ENCODE measurements at regions of chr18 and their contacts with region 1.

Region 1: GRCh38 chr18:21663578-21663977 is 41.0 kb downstream of the ABHD3 start:
- DNase-seq: no peak
- H3K4me3 Mint-ChIP-seq: no peak overlapping the region
- H3K27ac Mint-ChIP-seq: no peak overlapping the region
- H3K4me1 Mint-ChIP-seq: no peaks in the 10 kb centered on the region
- H3K27me3 Mint-ChIP-seq: no peaks in the 10 kb centered on the region

Region 2: DNA sequence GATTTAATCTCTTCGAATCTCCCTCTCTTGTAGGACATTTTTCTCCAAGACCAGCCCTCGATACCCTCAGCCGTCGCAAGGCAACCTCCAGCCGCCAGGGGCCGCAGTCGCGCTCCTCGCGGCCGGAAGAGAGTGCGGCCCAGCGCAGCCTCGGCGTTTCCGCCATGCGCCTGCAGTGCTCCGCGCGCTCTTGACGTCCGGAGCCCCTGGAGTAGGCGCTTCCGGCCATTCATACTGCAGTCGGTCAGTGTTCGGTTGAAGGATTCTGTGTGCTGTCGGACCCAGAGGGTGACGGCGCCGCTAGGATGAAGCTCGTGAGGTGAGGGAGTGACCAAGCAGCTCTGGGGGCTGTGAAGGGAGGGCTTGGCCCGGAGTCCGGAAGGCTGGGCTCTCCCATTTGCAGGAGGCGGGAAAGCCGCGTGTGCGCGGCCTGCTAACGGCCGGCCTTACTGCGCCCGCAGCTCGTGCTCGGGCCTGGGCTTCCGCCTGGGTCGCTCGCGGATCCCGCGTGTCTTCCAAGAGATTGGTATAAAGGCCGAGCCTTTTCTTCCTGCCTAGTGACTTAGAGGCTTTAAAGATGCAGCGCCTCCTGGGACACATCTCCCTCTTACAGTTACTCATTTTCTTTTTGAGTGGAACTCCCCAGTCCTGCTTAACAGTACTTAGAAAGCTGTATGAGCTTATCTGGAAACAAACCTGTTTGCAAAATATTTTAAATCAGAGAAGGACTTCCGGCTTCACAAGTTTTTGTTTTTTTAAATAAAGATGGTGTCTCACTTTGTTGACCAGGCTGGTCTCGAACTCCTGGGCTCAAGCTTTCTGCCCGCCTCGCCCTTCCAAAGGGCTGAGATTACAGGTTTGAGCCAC is 51.2 kb before region 1 on chr18 and contains the start of gene SNRPD1:
- intact Hi-C with region 1: no loop called
- DNase-seq: peak; percentile 98
- H3K4me3 Mint-ChIP-seq: peak within 1 kb of the TSS; percentile 91
- H3K27ac Mint-ChIP-seq: peak within 1 kb of the TSS; percentile 98
- H3K4me1 Mint-ChIP-seq: peaks cover 23% of the 10 kb centered on the region
- H3K27me3 Mint-ChIP-seq: no peaks in the 10 kb centered on the region
- total RNA-seq, gene SNRPD1: 182 and 192 TPM in 2 replicates

Region 3: DNA sequence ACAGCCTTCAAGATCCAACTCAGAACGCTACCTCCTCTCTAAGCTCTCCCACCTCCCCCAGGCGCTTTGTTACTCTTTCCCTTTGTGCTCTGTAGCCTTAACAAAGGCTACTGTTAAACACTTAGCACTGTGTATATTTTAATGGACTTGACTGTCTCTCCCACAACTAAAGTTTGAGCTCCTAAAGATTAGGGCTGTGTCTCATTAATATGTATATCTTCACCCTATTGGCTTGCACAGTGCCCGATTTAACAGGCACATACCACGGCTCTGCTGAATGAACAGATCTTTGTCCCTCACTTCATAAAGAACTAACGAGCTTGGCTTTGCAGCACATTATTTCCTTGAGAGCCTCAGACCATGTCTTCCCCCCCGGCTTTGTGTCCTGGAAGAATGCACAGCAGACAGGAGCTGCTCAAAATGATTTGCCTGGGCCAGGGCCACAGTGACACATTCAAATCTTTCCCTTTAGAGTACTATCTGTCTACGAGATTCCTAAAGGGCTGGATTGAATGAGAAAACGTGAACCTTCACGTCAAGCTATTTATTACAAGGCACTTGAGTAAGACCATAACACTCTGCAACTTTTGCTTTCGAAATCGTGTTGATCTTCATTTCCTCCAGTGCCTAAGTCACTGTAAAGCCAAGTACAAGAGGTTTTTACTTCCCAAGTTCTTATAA is 18.9 kb after region 1 on chr18:
- intact Hi-C with region 1: loop called (anchors 2 kb)
- DNase-seq: peak; percentile 80
- H3K4me3 Mint-ChIP-seq: no peak overlapping the region
- H3K27ac Mint-ChIP-seq: no peak overlapping the region
- H3K4me1 Mint-ChIP-seq: peaks cover 13% of the 10 kb centered on the region
- H3K27me3 Mint-ChIP-seq: no peaks in the 10 kb centered on the region